ENCODE measurements at regions of chr2 and their contacts with region 1.

Region 1: DNA sequence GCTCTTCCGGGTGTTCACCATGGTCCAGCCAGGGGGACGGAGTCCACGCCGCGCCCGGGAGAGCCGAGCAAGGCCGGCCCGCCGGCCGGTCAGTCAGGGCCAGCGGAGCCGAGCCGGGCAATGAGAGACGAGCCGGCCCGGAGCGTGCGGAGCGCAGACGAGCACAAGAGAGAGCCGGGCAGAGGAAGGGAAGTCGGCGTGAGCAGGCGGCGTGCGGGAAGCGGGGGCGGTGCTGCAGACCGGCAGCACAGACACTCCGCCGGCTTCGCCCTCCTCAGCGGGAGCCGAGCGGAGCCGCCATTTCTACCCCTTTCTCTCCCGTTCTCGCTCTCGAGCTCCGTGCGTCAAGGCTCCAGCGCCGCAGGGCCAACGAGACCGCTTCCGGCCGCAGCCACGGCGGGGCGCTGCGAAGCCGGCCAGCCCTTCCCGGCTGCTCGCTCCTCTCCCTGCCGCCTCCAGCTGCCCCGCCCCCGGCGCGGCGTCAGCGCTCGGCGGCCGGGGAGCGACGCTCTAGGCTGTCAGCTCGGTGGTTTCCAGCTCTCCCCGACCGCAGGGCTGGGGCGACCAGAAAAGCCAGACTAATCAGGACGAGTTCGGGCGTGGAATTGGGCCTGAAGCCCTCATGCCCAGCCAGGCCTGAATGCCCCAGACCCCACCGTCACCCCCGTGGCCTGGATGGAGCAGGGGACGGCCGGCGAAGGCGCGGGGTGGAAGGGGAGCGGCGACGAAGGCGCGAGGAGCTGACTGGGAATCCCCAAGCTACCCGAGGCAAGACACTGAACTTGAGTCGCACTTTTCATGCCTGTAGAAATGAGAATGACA is at the start of gene ATAD2B:
- DNase-seq: peak; percentile 85
- H3K4me3 ChIP-seq: peak within 1 kb of the TSS; percentile 90
- H3K27ac ChIP-seq: peak within 1 kb of the TSS; percentile 98
- H3K27me3 ChIP-seq: no peaks in the 10 kb centered on the region
- CTCF ChIP-seq: peak; percentile 75
- polyA plus RNA-seq, gene ATAD2B: 4.5 and 6.0 TPM in 2 replicates

Region 2: DNA sequence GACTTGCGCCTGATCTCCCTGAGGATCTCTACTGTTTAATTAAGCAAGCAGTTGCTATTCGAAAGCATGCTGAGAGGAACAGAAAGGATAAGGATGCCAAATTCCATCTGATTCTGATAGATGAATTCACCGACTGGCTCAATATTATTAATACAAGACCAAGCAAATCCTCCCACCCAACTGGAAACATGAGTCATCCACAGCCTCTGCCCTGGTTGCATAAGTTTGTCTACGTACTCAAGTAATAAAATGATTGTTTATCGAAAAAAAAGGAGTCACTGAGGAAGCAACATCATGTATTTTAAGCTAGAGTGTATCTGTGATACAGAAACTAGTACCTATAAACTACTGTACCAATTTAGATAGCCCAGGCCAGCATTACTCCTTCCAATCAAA is 26.0 kb before region 1 on chr2:
- CTCF ChIA-PET with region 1: interaction called, 30 read pairs
- POLR2A ChIA-PET with region 1: interaction called, 8 read pairs
- DNase-seq: peak; percentile 55
- H3K4me3 ChIP-seq: no peak overlapping the region
- H3K27ac ChIP-seq: peak overlapping the region; percentile 59
- H3K27me3 ChIP-seq: no peaks in the 10 kb centered on the region
- CTCF ChIP-seq: no peak

Region 3: GRCh38 chr2:23939987-23940717 is 13.2 kb after region 1 on chr2 and contains the start of gene UBXN2A:
- CTCF ChIA-PET with region 1: interaction called, 37 read pairs
- POLR2A ChIA-PET with region 1: interaction called, 25 read pairs
- DNase-seq: no peak
- H3K4me3 ChIP-seq: peak within 1 kb of the TSS; percentile 80
- H3K27ac ChIP-seq: peak within 1 kb of the TSS; percentile 65
- H3K27me3 ChIP-seq: no peaks in the 10 kb centered on the region
- CTCF ChIP-seq: no peak
- polyA plus RNA-seq, gene UBXN2A: 9.0 and 13.1 TPM in 2 replicates

Region 4: DNA sequence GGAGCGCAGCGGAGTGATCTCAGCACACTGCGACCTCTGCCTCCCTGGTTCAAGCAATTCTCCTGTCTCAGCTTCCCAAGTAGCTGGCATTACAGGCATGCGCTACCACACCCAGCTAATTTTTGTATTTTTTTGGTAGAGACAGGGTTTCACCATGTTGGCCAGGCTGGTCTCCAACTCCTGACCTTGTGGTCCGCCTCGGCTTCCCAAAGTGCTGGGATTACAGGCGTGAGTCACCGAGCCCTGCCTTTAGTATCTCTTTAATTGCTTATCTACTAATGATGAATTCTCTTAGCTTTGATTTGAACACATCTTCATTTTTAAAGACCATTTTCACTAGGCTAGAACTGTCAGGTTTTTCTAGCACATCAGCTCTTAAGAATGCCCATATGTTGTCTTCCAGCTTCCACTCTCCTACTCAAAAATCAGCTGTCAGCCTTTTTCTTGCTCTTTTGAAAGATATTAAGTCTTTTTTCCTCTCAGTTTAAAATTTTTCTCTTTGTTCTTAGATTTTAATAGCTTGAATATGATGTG is 66.8 kb after region 1 on chr2:
- CTCF ChIA-PET with region 1: interaction called, 7 read pairs
- POLR2A ChIA-PET with region 1: interaction called, 10 read pairs
- DNase-seq: no peak
- H3K4me3 ChIP-seq: no peak overlapping the region
- H3K27ac ChIP-seq: no peak overlapping the region
- H3K27me3 ChIP-seq: no peaks in the 10 kb centered on the region
- CTCF ChIP-seq: no peak

Region 5: GRCh38 chr2:24015562-24016346 is 88.8 kb after region 1 on chr2:
- CTCF ChIA-PET with region 1: interaction called, 8 read pairs
- POLR2A ChIA-PET with region 1: interaction called, 10 read pairs
- DNase-seq: peak; percentile 47
- H3K4me3 ChIP-seq: no peak overlapping the region
- H3K27ac ChIP-seq: peak overlapping the region; percentile 87
- H3K27me3 ChIP-seq: no peaks in the 10 kb centered on the region
- CTCF ChIP-seq: no peak

Region 6: GRCh38 chr2:24075915-24076848 is 149.2 kb after region 1 on chr2 and contains the start of gene SF3B6:
- CTCF ChIA-PET with region 1: interaction called, 6 read pairs
- POLR2A ChIA-PET with region 1: interaction called, 13 read pairs
- DNase-seq: peak; percentile 96
- H3K4me3 ChIP-seq: peak within 1 kb of the TSS; percentile 98
- H3K27ac ChIP-seq: peak within 1 kb of the TSS; percentile 88
- H3K27me3 ChIP-seq: no peaks in the 10 kb centered on the region
- CTCF ChIP-seq: no peak
- polyA plus RNA-seq, gene SF3B6: 209 and 272 TPM in 2 replicates

Region 7: DNA sequence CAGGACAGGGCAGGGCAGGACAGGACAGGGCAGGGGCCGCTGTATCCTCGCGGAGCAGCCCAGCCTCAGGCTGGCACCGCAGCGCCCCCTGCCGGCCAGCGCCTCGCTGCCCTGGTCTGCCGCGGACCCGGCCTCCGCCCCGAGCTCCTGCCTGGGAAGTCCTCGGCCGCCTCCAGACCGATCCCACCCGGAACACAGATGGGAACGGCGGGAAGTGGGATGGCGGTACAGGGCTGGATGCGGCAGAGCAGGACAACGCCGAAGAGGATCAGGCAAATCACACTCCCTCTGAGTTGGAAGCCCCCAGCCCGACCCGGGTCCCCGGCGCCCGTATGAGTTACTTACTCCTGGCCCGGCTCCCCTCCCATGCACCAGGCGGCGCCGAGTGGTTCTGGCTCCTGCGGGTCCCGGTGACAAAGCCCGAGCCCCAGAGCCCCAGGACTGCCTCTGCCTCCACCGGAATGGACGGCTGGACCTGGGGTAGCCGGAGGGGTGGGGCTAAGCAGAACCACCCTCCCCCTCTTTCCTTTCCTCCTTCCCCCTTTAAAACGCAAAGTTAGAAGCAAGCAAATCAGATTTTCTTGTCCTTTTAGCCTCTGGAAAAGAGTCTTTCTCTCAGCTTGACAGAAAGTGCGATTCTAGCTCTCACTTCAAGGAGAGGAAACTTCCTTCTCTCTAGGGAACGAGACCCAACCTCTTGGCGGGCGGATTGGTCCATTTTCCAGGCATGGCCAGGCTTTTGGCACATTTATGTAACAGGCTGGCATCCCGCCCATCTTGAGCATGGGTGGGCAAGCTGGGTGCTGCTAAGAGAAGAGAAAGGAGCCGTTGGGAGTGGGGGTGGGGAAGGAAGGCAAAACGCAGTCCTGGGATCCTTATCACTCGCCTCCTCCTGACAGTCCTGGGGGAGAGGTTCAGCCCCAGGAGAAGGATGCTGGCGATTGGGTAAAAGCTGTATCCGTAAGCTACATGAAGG is 157.7 kb after region 1 on chr2 and contains the start of gene TP53I3:
- CTCF ChIA-PET with region 1: interaction called, 47 read pairs
- POLR2A ChIA-PET with region 1: interaction called, 16 read pairs
- DNase-seq: peak; percentile 74
- H3K4me3 ChIP-seq: peak within 1 kb of the TSS; percentile 73
- H3K27ac ChIP-seq: peak within 1 kb of the TSS; percentile 94
- H3K27me3 ChIP-seq: no peaks in the 10 kb centered on the region
- CTCF ChIP-seq: peak; percentile 76
- polyA plus RNA-seq, gene TP53I3: 44.6 and 55.2 TPM in 2 replicates